Panc1 (cell line): ENCODE measurements at regions of chr2 and their contacts with region 1.

Region 1: DNA sequence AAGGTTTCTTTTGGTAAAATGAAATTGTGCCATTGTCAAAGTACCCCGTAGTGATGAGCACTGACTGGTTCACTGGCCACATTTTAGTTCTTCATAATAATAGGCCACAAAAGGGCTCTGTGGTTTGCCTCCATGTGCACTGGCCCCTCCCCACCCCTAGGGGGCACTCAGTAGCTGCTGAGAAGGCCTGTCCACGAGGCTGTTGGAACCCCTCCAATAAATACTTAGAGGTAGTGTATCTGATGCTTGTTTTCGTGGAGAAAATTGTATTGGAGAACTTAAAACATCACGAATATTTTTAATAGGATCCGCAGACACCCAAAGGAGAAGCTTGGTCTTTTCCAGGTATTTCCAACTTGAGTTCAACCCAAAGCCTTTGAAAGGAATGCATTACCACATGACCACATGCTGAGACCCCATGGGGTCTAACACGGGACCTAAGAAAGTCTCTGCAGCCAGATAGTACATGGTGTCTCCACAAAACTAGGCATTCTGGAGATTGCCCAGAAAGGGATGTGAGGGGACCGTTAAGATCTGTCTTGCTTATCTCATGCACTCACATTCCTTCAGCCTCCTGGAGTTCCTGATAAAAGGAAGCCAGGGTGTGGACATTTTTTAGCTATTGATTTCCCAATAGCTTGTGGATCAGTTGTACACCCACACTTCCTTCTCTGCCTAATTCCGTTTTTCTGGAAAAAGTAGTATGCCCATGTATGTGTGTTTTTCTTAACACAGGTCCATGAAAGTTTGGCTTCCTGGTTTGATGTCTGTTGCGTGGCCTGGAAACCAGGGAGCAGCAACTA is 28.5 kb upstream of the NOSTRIN start:
- DNase-seq: no peak
- ATAC-seq: peak; percentile 78
- H3K4me3 ChIP-seq: no peak overlapping the region
- H3K27ac ChIP-seq: no peak overlapping the region
- H3K4me1 ChIP-seq: no peaks in the 10 kb centered on the region
- H3K27me3 ChIP-seq: no peaks in the 10 kb centered on the region
- CTCF ChIP-seq: peak; percentile 86

Region 2: DNA sequence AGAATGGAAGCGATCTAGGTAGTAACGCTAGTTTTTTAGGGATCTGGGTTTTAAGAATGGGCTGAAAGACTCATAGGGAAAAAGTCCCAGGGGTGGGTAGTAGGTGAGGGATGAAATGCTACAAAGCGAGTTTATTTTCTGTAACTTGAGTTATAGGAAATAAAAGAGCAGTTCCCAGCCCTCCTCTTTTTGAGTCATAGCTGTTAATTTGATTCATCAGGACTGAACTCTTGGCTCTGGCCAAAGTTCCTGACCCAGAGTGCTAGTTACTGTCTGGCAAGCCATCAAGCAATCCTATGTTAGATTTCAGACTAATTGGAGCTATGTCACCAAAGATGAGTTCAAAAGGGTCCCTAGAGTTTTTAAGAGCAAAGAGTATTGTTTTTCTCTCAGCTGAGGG is 11.1 kb after region 1 on chr2:
- CTCF ChIA-PET with region 1: interaction called, 11 read pairs
- POLR2A ChIA-PET with region 1: no interaction called
- in situ Hi-C with region 1: no loop called
- intact Hi-C with region 1: no loop called
- DNase-seq: no peak
- ATAC-seq: no peak
- H3K4me3 ChIP-seq: no peak overlapping the region
- H3K27ac ChIP-seq: no peak overlapping the region
- H3K4me1 ChIP-seq: no peaks in the 10 kb centered on the region
- H3K27me3 ChIP-seq: no peaks in the 10 kb centered on the region
- CTCF ChIP-seq: no peak

Region 3: DNA sequence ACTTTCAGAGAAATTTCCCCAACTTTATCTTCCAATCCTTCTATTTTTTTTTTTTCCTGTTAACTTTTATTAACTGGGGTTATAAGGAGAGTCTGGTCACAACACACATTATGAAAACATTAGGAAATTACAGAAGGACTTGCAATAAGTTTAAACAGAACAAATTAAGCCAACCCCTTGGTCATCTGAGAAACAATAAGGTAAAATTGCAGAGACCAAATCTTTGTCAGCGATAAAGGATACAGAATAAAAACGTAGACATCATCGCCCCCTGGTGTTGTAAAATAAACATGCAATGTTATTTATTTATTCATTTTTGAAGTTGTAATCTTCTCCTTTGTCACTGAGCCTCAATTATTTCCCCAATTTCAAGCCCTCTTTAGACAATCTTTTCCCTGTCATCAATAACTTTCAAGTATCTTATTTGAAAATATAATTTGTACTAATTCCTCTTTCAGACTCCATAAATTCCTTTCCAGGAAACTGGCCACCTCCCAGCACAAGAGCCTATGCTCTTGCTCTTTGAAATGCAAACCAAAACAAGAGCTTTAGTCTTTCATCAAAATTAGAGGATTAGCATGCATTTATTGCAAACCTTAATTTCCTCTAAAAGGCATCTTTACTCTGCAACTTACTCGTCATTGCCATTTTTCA is 146.7 kb after region 1 on chr2:
- CTCF ChIA-PET with region 1: no interaction called
- POLR2A ChIA-PET with region 1: no interaction called
- in situ Hi-C with region 1: no loop called
- intact Hi-C with region 1: loop called (anchors 2 kb)
- DNase-seq: no peak
- ATAC-seq: peak; percentile 58; the same call in 1 of the 2 replicates
- H3K4me3 ChIP-seq: no peak overlapping the region
- H3K27ac ChIP-seq: no peak overlapping the region
- H3K4me1 ChIP-seq: no peaks in the 10 kb centered on the region
- H3K27me3 ChIP-seq: peaks cover 8% of the 10 kb centered on the region
- CTCF ChIP-seq: peak; percentile 69; the same call in 1 of the 2 replicates